WTC11 (cell line): ENCODE measurements at regions of chr20 and their contacts with region 1.

Region 1: GRCh38 chr20:43537921-43538877 is 20.6 kb upstream of the SGK2 start:
- DNase-seq: peak; percentile 80
- ATAC-seq: peak; percentile 84
- H3K4me3 Mint-ChIP-seq: no peak overlapping the region
- H3K27ac Mint-ChIP-seq: no peak overlapping the region
- H3K4me1 Mint-ChIP-seq: no peaks in the 10 kb centered on the region
- H3K27me3 Mint-ChIP-seq: no peaks in the 10 kb centered on the region
- CTCF ChIP-seq: peak; percentile 72

Region 2: GRCh38 chr20:43507150-43508080 is 30.8 kb before region 1 on chr20 and contains the start of gene L3MBTL1:
- CTCF ChIA-PET with region 1: interaction called, 10 read pairs
- POLR2A ChIA-PET with region 1: no interaction called
- DNase-seq: peak; percentile 72
- ATAC-seq: peak; percentile 67
- H3K4me3 Mint-ChIP-seq: peak within 1 kb of the TSS; percentile 68
- H3K27ac Mint-ChIP-seq: peak within 1 kb of the TSS; percentile 86
- H3K4me1 Mint-ChIP-seq: peaks cover 8% of the 10 kb centered on the region; the same call in 1 of the 2 replicates
- H3K27me3 Mint-ChIP-seq: peaks cover 44% of the 10 kb centered on the region
- CTCF ChIP-seq: no peak
- total RNA-seq, gene L3MBTL1: 28.3 to 28.7 TPM (median 28.3 TPM) in 3 replicates

Region 3: DNA sequence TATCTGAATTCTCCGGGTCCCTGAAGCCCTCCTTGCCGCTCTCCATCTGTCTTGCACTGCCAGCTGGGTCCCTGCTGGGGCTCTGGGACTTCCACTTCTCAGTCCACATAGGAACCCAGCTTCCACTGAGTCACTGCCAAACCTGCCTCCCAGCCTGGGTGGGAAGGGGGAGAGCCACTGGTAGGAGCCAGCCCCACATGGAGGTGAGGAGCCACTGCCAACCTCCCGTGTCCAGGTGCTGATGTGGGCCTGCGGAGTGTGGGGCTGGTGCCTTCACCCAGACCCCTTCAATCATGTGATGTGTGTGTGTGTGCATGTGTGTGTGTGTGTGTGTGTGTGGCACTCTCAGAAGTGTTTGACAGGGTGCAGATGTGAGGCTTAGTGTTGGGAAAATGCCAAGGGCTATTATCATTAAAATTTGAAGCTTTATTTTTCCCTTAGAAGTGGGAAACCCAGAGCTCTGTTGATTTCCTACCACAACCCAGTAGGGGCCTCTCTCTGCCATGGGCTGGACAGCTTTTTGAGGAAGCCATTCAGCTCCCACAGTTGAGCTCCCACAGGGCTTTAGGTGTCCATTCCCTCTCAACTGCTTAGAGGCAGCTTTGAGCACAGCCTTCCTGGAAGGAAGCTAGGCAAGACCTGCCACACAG is 11.3 kb after region 1 on chr20:
- CTCF ChIA-PET with region 1: interaction called, 13 read pairs
- POLR2A ChIA-PET with region 1: no interaction called
- DNase-seq: no peak
- ATAC-seq: no peak
- H3K4me3 Mint-ChIP-seq: no peak overlapping the region
- H3K27ac Mint-ChIP-seq: no peak overlapping the region
- H3K4me1 Mint-ChIP-seq: peaks cover 5% of the 10 kb centered on the region
- H3K27me3 Mint-ChIP-seq: peaks cover 3% of the 10 kb centered on the region; the same call in 1 of the 2 replicates
- CTCF ChIP-seq: no peak

Region 4: GRCh38 chr20:43605715-43606114 is 67.5 kb after region 1 on chr20:
- CTCF ChIA-PET with region 1: no interaction called
- POLR2A ChIA-PET with region 1: no interaction called
- DNase-seq: no peak
- ATAC-seq: no peak
- H3K4me3 Mint-ChIP-seq: no peak overlapping the region
- H3K27ac Mint-ChIP-seq: no peak overlapping the region
- H3K4me1 Mint-ChIP-seq: no peaks in the 10 kb centered on the region
- H3K27me3 Mint-ChIP-seq: no peaks in the 10 kb centered on the region
- CTCF ChIP-seq: no peak

Region 5: DNA sequence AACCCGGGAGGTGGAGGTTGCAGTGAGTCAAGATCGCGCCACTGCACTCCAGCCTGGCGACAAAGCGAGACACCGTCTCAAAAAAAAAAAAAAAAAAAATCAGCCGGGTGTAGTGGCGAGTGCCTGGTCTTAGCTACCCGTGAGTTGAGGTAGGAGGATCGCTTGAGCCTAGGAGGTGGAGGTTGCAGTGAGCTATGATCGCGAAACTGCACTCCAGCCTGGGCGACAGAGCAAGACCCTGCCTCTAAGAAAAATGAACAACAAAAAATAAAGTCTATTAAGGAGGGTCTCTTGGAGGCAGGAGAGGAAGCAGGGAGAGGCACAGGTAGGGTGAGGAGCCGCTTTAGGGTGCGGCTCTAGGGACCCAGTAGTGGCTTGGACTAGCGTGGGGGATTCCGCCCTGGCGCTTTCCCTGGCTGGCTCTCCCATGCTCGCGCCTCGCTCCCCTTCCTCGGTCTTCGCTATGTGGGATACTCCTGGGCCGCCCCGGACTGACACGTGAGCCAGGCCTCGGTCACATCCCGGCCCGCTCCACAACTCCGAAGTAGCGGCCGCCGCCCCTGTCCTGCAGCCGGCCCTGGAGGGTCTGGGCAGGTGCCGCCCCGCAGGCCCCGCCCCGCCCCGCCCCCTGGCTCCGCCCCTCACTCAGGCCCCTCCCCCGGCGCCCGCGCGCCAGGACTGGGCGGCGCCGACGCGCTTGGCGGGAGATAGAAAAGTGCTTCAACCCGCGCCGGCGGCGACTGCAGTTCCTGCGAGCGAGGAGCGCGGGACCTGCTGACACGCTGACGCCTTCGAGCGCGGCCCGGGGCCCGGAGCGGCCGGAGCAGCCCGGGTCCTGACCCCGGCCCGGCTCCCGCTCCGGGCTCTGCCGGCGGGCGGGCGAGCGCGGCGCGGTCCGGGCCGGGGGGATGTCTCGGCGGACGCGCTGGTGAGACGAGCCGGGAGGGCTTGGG is 128.5 kb after region 1 on chr20 and contains the start of gene MYBL2:
- CTCF ChIA-PET with region 1: interaction called, 11 read pairs
- POLR2A ChIA-PET with region 1: no interaction called
- DNase-seq: peak; percentile 78
- ATAC-seq: peak; percentile 88
- H3K4me3 Mint-ChIP-seq: peak within 1 kb of the TSS; percentile 83
- H3K27ac Mint-ChIP-seq: no peak within 1 kb of the TSS
- H3K4me1 Mint-ChIP-seq: peaks cover 4% of the 10 kb centered on the region
- H3K27me3 Mint-ChIP-seq: peaks cover 22% of the 10 kb centered on the region
- CTCF ChIP-seq: no peak
- total RNA-seq, gene MYBL2: 133 to 166 TPM (median 133 TPM) in 3 replicates

Region 6: GRCh38 chr20:43715044-43715443 is 176.8 kb after region 1 on chr20:
- CTCF ChIA-PET with region 1: no interaction called
- POLR2A ChIA-PET with region 1: no interaction called
- DNase-seq: no peak
- ATAC-seq: no peak
- H3K4me3 Mint-ChIP-seq: no peak overlapping the region
- H3K27ac Mint-ChIP-seq: no peak overlapping the region
- H3K4me1 Mint-ChIP-seq: no peaks in the 10 kb centered on the region
- H3K27me3 Mint-ChIP-seq: no peaks in the 10 kb centered on the region
- CTCF ChIP-seq: no peak